IMR-90 (cell line): ENCODE measurements at regions of chr10 and their contacts with region 1.

Region 1: GRCh38 chr10:101018600-101019439 is 12.1 kb downstream of the PDZD7 start:
- DNase-seq: peak; percentile 77
- ATAC-seq: peak; percentile 90
- H3K4me3 ChIP-seq: no peak overlapping the region
- H3K27ac ChIP-seq: no peak overlapping the region
- H3K4me1 ChIP-seq: peaks cover 10% of the 10 kb centered on the region
- H3K27me3 ChIP-seq: peaks cover 1% of the 10 kb centered on the region; the same call in 1 of the 2 replicates
- CTCF ChIP-seq: peak; percentile 89
- POLR2A ChIP-seq: no peak
- RAD21 ChIP-seq: peak; percentile 79

Region 2: GRCh38 chr10:100998991-100999741 is 19.7 kb before region 1 on chr10:
- CTCF ChIA-PET with region 1: interaction called, 48 read pairs
- POLR2A ChIA-PET with region 1: no interaction called
- dilution Hi-C with region 1: no loop called
- in situ Hi-C with region 1: no loop called
- intact Hi-C with region 1: no loop called
- DNase-seq: peak; percentile 75
- ATAC-seq: peak; percentile 57
- H3K4me3 ChIP-seq: peak overlapping the region; percentile 78
- H3K27ac ChIP-seq: peak overlapping the region; percentile 95
- H3K4me1 ChIP-seq: peaks cover 25% of the 10 kb centered on the region
- H3K27me3 ChIP-seq: no peaks in the 10 kb centered on the region
- CTCF ChIP-seq: peak; percentile 85
- POLR2A ChIP-seq: peak; percentile 87
- RAD21 ChIP-seq: peak; percentile 57

Region 3: GRCh38 chr10:101569838-101570766 is 551.3 kb after region 1 on chr10:
- CTCF ChIA-PET with region 1: no interaction called
- POLR2A ChIA-PET with region 1: no interaction called
- dilution Hi-C with region 1: no loop called
- in situ Hi-C with region 1: no loop called
- intact Hi-C with region 1: no loop called
- DNase-seq: peak; percentile 35
- ATAC-seq: peak; percentile 91
- H3K4me3 ChIP-seq: peak overlapping the region; percentile 49
- H3K27ac ChIP-seq: no peak overlapping the region
- H3K4me1 ChIP-seq: peaks cover 6% of the 10 kb centered on the region
- H3K27me3 ChIP-seq: peaks cover 43% of the 10 kb centered on the region
- CTCF ChIP-seq: peak; percentile 64
- POLR2A ChIP-seq: 0 out of 2 replicates have a peak, but pooled peaks have one; percentile 12
- RAD21 ChIP-seq: peak; percentile 70